Left ventricle myocardium superior (tissue), 1 donor: ENCODE measurements at regions of chr2 and their contacts with region 1.

Region 1: GRCh38 chr2:61538200-61538919 is at the start of gene XPO1:
- DNase-seq: peak; percentile 100
- ATAC-seq: peak; percentile 93
- total RNA-seq, gene XPO1: 66.0 TPM

Region 2: DNA sequence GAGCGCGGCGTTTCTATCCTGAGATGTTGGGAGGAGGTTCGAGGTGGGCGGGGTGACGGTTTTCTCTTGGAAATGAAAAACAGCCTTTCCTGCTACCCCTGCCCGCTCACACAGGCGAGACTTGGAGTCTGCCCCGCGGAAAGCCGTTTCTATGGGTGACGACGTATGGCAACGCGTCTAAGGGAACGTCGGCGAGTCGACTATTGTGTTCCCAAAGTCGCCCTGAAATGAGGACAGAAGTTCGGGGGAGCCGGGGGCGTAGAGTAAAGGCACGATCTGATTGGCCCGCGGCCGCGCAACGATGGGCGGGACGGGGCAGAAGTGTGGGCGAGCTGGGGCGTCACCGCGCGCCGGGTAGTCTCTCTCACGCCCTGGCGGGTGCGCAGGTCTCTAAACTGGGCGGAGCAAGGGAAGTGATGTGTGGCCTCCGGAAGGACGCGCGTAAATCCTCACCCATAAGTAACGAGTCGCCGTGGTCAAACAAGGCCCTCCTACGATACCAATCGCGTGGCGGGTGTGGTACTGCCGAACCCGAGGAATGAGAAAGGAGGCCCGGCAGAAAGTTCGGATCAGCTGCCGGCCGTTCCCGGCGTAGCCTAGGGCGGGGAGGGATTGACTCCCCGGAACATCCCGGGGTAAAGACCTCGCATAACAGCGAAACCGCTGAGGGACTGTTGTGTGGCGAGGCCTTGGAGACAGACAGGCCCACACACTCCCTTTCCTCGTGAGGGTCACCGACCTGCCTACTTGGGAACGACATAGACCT is 225.9 kb after region 1 on chr2:
- intact Hi-C with region 1: loop called (anchors 5 kb)
- DNase-seq: peak; percentile 99
- ATAC-seq: peak; percentile 99